AG04449 (cell line): ENCODE measurements at regions of chr17 and their contacts with region 1.

Region 1: GRCh38 chr17:40026816-40027613 is 11.8 kb downstream of the CSF3 start:
- DNase-seq: no peak
- H3K4me3 ChIP-seq: no peak overlapping the region
- CTCF ChIP-seq: peak; percentile 95

Region 2: GRCh38 chr17:39872751-39873150 is 154.3 kb before region 1 on chr17:
- CTCF ChIA-PET with region 1: interaction called, 19 read pairs
- POLR2A ChIA-PET with region 1: no interaction called
- DNase-seq: peak; percentile 5
- H3K4me3 ChIP-seq: no peak overlapping the region
- CTCF ChIP-seq: no peak

Region 3: GRCh38 chr17:39927101-39927928 is 99.7 kb before region 1 on chr17 and contains the starts of genes LRRC3C and ORMDL3:
- CTCF ChIA-PET with region 1: no interaction called
- POLR2A ChIA-PET with region 1: no interaction called
- DNase-seq: peak; percentile 41
- H3K4me3 ChIP-seq: peak within 1 kb of the TSS; percentile 82
- CTCF ChIP-seq: no peak

Region 4: GRCh38 chr17:39996800-39997199 is 30.2 kb before region 1 on chr17:
- CTCF ChIA-PET with region 1: interaction called, 13 read pairs
- POLR2A ChIA-PET with region 1: no interaction called
- DNase-seq: no peak
- H3K4me3 ChIP-seq: no peak overlapping the region
- CTCF ChIP-seq: no peak

Region 5: GRCh38 chr17:40062329-40063186 is 35.5 kb after region 1 on chr17 and contains the start of gene THRA:
- CTCF ChIA-PET with region 1: interaction called, 33 read pairs
- POLR2A ChIA-PET with region 1: no interaction called
- DNase-seq: no peak
- H3K4me3 ChIP-seq: peak within 1 kb of the TSS; percentile 90
- CTCF ChIP-seq: no peak

Region 6: DNA sequence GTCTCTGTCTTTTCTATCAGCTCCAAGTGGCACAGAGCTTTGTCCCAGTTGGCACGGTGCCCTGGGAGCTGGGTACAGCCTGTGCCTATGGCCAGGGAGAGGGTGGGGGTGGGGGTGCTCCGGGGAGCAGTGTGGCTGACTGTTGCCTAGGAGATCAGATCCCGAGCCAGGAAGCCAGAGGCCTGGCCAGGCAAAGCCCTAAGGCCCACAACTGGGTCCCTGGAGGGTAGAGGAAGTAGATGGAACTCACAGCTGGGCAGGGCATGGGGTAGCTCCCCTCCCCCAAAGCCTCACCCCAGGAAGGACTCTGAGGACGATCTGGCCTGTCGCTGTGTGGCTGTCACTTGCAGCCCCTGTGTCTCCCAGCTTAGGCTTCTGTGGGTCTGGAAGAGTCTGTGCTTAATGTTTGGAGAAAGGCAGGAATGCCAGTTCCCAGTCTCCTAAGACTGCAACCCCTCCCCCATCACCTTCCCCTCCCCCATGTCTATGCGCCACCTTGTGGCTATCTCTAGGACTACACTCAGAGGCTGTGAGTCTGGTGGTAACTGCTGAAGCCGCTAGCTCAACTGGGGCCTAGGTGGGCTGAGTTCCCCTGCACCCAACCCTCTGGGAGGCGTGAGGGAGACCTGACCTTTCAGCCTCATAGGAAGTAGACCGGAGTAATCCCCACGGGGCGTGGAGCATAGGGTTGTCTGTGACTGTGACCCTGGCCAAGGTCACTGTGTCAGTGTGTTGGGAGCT is 48.4 kb after region 1 on chr17:
- CTCF ChIA-PET with region 1: interaction called, 27 read pairs
- POLR2A ChIA-PET with region 1: no interaction called
- DNase-seq: no peak
- H3K4me3 ChIP-seq: no peak overlapping the region
- CTCF ChIP-seq: peak; percentile 89

Region 7: GRCh38 chr17:40098846-40099618 is 72.0 kb after region 1 on chr17:
- CTCF ChIA-PET with region 1: interaction called, 14 read pairs
- POLR2A ChIA-PET with region 1: no interaction called
- DNase-seq: peak; percentile 94
- H3K4me3 ChIP-seq: peak overlapping the region; percentile 87
- CTCF ChIP-seq: no peak

Region 8: DNA sequence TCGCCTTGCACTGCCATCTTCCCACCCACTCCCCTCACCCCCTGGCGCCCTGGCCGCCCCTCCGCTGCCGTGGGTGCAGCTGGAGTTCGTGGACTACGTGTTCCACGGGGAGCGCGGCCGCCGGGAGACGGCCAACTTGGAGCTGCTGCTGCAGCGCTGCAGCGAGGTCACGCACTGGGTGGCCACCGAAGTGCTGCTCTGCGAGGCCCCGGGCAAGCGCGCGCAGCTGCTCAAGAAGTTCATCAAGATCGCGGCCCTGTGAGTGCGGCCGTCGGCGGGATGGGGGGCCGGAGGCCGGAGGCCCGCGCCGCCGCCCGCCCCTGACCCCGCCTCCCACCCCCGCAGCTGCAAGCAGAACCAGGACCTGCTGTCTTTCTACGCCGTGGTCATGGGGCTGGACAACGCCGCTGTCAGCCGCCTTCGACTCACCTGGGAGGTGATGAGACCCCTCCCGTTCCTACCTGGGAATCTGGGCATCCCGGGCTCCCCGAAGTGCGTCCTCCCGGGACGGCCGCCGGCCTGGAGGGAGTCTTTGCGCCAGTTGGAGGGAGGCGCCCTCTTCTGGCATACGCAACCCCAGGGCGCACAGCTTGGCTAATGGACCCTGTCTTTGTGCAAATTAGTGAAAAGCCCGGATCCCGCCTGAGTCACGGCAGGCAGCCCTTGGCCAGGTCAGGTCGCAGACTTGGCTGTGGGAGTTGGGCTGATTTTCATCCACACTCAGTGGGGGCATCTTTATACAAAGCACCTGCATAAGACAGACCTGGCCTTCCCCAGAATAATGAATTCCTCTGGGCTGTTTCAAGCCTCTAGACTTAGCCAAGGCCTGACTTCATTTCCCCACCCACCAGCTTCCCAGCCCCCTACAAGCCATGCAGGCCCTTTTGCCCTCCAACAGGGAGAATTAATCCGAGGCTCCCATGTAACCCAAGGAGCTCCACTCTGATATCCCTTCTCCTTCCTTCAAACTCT is 164.5 kb after region 1 on chr17:
- CTCF ChIA-PET with region 1: interaction called, 13 read pairs
- POLR2A ChIA-PET with region 1: no interaction called
- DNase-seq: no peak
- H3K4me3 ChIP-seq: peak overlapping the region; percentile 66
- CTCF ChIP-seq: peak; percentile 89